Calu3 (cell line): ENCODE measurements at regions of chr1 and their contacts with region 1.

Region 1: DNA sequence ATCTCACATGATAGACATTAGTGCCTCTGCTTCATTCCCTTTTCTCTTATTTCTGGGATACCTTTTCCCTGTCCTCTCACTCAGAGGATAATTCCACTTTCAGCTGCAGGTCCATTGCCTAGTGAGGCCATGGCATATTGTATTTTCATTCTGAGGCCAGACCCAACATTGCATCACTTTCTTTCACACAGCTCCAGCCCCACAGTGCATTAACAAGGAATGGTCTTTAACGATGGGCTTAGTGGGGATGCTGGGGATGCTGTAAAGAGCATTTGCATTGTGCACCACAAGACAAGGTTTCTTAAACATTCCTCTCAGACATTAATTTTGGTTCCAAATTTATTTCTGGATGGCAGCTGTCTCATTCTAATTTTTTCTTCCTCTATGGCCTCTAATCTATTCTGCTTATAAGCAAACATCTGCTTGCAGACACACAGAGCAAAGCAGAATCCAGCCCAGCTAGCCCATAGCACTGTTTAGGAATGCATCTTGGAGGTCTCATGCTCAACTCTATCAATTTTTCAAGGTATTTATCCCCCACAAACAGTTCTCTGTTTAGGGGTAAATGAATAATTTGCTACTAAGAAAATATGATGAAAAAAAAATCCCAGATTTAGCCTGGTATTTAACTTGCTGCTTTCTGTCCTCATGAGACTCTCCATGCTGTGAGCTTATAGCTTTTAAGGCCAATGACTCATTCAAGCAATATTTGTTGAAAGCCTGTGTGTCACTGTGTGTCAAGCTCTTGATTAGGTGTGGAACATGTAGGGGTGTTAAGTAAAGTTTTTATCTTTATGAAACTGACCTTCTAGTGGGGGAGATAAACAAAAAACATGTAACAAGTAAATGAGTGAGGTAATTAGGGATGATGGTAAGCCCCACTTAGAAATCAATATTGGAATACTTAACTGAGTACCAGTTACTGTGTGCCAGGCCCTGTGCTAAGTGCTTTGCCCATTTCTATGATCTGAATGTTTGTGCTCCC is 44.5 kb upstream of the CCDC190 start:
- DNase-seq: no peak
- H3K4me3 Mint-ChIP-seq: no peak overlapping the region
- H3K27ac Mint-ChIP-seq: peak overlapping the region; percentile 76
- H3K4me1 Mint-ChIP-seq: peaks cover 44% of the 10 kb centered on the region
- H3K27me3 Mint-ChIP-seq: no peaks in the 10 kb centered on the region
- CTCF ChIP-seq: no peak

Region 2: DNA sequence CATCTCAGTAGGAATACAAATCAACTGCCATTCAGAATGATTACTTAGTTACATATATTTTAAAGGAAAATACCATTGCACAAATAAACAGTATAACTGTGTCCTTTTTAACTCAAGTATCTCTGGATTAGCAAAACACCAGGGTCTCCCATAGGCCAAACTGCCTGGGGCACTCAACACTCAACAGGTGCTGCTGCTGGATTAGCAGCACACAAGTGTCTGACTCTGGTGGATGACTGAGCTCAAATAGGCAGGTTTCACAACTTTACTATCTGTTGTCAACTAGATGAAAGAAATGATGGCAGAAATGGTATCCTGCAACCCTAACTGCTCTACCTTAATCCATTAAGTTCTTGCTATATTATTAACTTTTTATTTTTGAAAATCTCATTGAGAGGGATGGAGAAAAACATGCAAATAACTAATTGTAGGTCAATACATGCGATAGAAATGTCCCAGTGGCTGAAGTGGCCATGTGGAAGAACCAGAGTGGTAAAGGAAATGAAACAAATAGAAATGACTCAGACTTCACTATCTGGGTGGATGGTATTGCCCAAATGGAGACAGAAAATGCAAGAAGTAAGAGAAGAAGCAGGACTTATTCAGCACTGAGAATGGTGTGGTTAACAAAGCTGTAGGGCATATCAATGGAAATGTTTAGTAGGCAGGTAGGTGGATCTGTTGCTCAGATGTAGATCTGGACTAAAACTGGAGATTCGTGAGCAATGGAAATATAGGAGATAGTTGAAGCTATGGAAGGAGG is 46.3 kb after region 1 on chr1:
- CTCF ChIA-PET with region 1: no interaction called
- intact Hi-C with region 1: loop called (anchors 10 kb)
- DNase-seq: no peak
- H3K4me3 Mint-ChIP-seq: no peak overlapping the region
- H3K27ac Mint-ChIP-seq: no peak overlapping the region
- H3K4me1 Mint-ChIP-seq: no peaks in the 10 kb centered on the region
- H3K27me3 Mint-ChIP-seq: no peaks in the 10 kb centered on the region
- CTCF ChIP-seq: no peak

Region 3: DNA sequence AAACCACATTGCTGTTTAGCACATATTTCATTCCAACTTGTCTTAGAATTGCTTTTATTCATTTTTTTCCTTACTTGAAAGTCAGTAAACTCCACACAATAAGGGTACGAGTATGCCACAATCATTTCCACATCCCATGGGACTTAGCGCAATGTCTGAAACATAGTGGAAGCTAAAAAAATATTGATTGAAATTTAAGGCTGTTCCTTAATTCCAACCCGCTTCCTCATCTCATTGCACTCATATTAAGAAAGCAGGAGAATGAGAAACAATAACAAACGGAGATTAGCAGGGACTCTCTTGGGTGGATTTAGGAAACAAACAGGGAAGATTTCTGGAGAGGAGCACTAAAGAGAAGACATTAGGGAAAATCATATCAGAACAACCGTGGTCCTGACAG is 124.4 kb after region 1 on chr1:
- CTCF ChIA-PET with region 1: no interaction called
- intact Hi-C with region 1: loop called (anchors 5 kb)
- DNase-seq: no peak
- H3K4me3 Mint-ChIP-seq: no peak overlapping the region
- H3K27ac Mint-ChIP-seq: peak overlapping the region; percentile 31
- H3K4me1 Mint-ChIP-seq: peaks cover 49% of the 10 kb centered on the region
- H3K27me3 Mint-ChIP-seq: no peaks in the 10 kb centered on the region
- CTCF ChIP-seq: no peak